Activated CD8-positive, alpha-beta T cell treated with anti-CD3 and anti-CD28 coated beads, Interleukin-2, amount 10 ng/mL, durations not matched to agents 7 days and 5 days (primary cell): ENCODE measurements at regions of chr16 and their contacts with region 1.

Region 1: GRCh38 chr16:67514382-67514828 is 14.2 kb upstream of the RIPOR1 start:
- DNase-seq: peak; percentile 90
- ATAC-seq: peak; percentile 82
- H3K4me3 Mint-ChIP-seq: no peak overlapping the region
- H3K27ac Mint-ChIP-seq: peak overlapping the region; percentile 84
- H3K4me1 Mint-ChIP-seq: peaks cover 36% of the 10 kb centered on the region
- H3K27me3 Mint-ChIP-seq: no peaks in the 10 kb centered on the region

Region 2: DNA sequence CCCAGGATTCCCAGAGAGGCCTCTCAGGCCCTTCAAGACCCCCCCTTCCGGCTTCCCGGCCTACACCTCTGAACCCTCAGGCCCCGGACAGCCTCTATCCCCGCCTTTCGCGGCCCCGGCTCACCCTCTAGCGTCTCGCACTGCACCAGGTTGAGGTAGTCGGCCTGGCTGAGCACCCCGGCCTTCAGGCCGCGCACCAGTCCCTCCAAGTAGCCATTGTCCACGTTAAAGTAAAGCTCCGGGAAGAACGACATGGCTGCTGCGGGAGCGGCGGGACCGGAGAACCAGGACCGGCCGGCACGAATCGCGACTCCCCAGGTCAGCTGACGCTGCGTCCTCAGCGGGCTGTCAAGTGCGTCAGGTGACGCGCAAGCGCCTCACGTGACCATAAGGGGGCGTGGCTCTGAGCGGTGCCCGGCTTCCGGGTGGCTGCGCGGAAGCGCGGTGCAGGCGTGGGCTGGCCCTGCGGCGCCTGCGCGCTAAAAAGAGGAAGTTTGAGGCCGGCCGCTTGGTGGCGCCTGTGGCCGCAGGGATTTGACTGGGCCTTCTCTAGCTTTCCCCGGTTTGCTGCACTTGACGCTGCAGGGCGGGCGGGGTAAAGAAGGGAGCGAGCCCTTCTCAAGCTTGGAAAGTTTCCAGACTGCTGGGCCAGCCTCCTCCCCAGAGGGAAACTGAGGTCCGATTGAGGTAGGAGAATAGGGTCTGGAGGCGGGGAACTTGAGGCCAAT is 33.4 kb before region 1 on chr16 and contains the start of gene ATP6V0D1:
- CTCF ChIA-PET with region 1: interaction called, 95 read pairs
- POLR2A ChIA-PET with region 1: interaction called, 6 read pairs
- DNase-seq: peak; percentile 99
- ATAC-seq: peak; percentile 89
- H3K4me3 Mint-ChIP-seq: peak within 1 kb of the TSS; percentile 98
- H3K27ac Mint-ChIP-seq: peak within 1 kb of the TSS; percentile 99
- H3K4me1 Mint-ChIP-seq: peaks cover 38% of the 10 kb centered on the region
- H3K27me3 Mint-ChIP-seq: no peaks in the 10 kb centered on the region
- total RNA-seq, gene ATP6V0D1: 52.7 to 58.1 TPM

Region 3: DNA sequence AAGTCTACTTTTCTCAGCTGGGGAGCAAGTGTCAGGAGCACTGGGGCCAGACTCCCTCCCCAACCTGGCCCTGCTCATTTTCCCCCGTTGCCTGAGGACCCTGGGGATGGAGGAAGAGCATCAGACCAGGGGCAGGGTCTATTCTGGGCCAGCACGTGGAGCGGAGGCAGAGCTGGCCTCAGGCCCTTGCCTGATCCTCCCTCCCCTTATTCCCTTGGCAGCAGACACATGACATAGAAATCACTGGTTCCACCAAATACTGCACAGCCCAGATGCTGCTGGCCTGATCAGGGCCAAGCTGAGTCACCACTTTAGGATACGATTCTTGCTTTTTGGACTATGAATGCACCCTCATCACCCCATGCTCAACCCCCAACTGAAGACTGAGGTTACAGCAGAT is 15.3 kb before region 1 on chr16:
- CTCF ChIA-PET with region 1: interaction called, 277 read pairs
- POLR2A ChIA-PET with region 1: interaction called, 5 read pairs
- DNase-seq: no peak
- ATAC-seq: no peak
- H3K4me3 Mint-ChIP-seq: no peak overlapping the region
- H3K27ac Mint-ChIP-seq: peak overlapping the region; percentile 34
- H3K4me1 Mint-ChIP-seq: peaks cover 13% of the 10 kb centered on the region
- H3K27me3 Mint-ChIP-seq: no peaks in the 10 kb centered on the region

Region 4: GRCh38 chr16:67504041-67505021 is 10.1 kb before region 1 on chr16:
- CTCF ChIA-PET with region 1: interaction called, 277 read pairs
- POLR2A ChIA-PET with region 1: interaction called, 3 read pairs
- DNase-seq: peak; percentile 85
- ATAC-seq: peak; percentile 94
- H3K4me3 Mint-ChIP-seq: peak overlapping the region; percentile 45
- H3K27ac Mint-ChIP-seq: peak overlapping the region; percentile 96
- H3K4me1 Mint-ChIP-seq: peaks cover 42% of the 10 kb centered on the region
- H3K27me3 Mint-ChIP-seq: no peaks in the 10 kb centered on the region

Region 5: DNA sequence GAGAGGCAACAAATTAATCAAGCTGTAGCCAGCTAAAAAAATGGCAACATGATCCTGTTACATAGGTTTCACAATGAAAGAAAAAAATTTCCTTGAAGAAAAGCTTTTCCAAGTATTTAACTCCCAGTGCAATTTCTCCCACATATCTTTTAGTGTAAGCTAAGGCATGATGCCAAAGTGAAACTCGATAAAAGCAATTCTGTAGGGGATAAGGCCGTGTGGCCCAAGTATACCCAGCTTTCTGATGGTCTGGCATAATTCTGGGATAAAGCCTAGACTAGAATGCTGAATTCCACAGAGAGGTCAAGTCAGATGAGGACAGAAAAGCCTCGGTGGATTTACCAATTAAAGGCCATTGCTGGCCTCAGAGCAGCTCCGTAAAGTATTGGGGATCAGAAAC is 84.1 kb after region 1 on chr16:
- CTCF ChIA-PET with region 1: no interaction called
- POLR2A ChIA-PET with region 1: no interaction called
- DNase-seq: no peak
- ATAC-seq: no peak
- H3K4me3 Mint-ChIP-seq: no peak overlapping the region
- H3K27ac Mint-ChIP-seq: no peak overlapping the region
- H3K4me1 Mint-ChIP-seq: peaks cover 21% of the 10 kb centered on the region
- H3K27me3 Mint-ChIP-seq: no peaks in the 10 kb centered on the region